Activated B cell treated with CpG ODN at 0.5 μM for 24 hours (primary cell): ENCODE measurements at regions of chr17 and their contacts with region 1.

Region 1: GRCh38 chr17:81833160-81833920 is at the start of gene MCRIP1:
- DNase-seq: peak; percentile 97
- ATAC-seq: peak; percentile 81
- H3K4me3 Mint-ChIP-seq: peak within 1 kb of the TSS; percentile 92
- H3K27ac Mint-ChIP-seq: peak within 1 kb of the TSS; percentile 91
- H3K4me1 Mint-ChIP-seq: peaks cover 22% of the 10 kb centered on the region
- H3K27me3 Mint-ChIP-seq: no peaks in the 10 kb centered on the region
- CTCF ChIP-seq: no peak
- total RNA-seq, gene MCRIP1: 75.0 and 90.4 TPM in 2 replicates

Region 2: GRCh38 chr17:81576621-81577277 is 256.6 kb before region 1 on chr17:
- CTCF ChIA-PET with region 1: no interaction called
- POLR2A ChIA-PET with region 1: no interaction called
- intact Hi-C with region 1: no loop called
- DNase-seq: no peak
- ATAC-seq: no peak
- H3K4me3 Mint-ChIP-seq: no peak overlapping the region
- H3K27ac Mint-ChIP-seq: no peak overlapping the region
- H3K4me1 Mint-ChIP-seq: peaks cover 8% of the 10 kb centered on the region
- H3K27me3 Mint-ChIP-seq: no peaks in the 10 kb centered on the region
- CTCF ChIP-seq: no peak

Region 3: DNA sequence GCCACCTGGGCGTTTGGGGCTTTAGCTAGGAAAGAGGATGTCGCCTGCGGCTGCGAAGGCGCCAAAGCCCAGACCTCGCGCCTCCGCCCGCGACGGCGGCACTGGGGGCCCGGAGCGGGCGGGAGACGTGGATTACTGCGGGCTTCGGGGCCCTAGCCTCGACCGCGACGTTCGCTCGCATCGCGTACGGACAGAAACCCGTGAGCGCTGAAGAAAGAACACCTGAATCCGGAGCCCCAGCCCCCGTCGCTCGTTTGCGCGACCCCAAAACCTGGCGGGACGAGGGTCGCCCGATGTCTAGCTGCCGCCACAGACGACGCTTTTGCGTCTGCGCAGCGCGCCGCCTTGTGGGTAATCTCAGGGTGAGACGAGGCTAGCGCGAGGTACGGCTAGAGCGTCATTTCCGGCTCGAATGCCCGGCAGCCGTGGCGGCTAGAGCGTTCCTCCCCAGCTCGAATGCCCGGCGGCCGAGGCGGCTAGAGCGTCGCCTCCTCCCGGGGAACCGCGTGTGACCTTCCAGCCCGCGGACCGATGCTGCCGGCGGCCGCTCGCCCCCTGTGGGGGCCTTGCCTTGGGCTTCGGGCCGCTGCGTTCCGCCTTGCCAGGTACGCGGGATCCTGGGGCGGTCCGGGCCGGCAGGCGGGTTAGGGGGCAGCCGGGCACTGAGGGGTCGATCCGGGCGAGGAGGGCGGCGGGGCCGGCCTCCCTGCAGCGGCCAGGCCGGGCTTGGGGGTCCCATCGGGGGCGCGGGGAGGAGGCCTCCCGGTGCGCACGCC is 130.2 kb before region 1 on chr17 and contains the start of gene MRPL12:
- CTCF ChIA-PET with region 1: no interaction called
- POLR2A ChIA-PET with region 1: interaction called, 7 read pairs
- intact Hi-C with region 1: loop called (anchors 1 kb)
- DNase-seq: peak; percentile 84
- ATAC-seq: peak; percentile 94
- H3K4me3 Mint-ChIP-seq: peak within 1 kb of the TSS; percentile 89
- H3K27ac Mint-ChIP-seq: peak within 1 kb of the TSS; percentile 86
- H3K4me1 Mint-ChIP-seq: peaks cover 38% of the 10 kb centered on the region
- H3K27me3 Mint-ChIP-seq: no peaks in the 10 kb centered on the region
- CTCF ChIP-seq: no peak
- total RNA-seq, gene MRPL12: 68.8 and 69.8 TPM in 2 replicates

Region 4: DNA sequence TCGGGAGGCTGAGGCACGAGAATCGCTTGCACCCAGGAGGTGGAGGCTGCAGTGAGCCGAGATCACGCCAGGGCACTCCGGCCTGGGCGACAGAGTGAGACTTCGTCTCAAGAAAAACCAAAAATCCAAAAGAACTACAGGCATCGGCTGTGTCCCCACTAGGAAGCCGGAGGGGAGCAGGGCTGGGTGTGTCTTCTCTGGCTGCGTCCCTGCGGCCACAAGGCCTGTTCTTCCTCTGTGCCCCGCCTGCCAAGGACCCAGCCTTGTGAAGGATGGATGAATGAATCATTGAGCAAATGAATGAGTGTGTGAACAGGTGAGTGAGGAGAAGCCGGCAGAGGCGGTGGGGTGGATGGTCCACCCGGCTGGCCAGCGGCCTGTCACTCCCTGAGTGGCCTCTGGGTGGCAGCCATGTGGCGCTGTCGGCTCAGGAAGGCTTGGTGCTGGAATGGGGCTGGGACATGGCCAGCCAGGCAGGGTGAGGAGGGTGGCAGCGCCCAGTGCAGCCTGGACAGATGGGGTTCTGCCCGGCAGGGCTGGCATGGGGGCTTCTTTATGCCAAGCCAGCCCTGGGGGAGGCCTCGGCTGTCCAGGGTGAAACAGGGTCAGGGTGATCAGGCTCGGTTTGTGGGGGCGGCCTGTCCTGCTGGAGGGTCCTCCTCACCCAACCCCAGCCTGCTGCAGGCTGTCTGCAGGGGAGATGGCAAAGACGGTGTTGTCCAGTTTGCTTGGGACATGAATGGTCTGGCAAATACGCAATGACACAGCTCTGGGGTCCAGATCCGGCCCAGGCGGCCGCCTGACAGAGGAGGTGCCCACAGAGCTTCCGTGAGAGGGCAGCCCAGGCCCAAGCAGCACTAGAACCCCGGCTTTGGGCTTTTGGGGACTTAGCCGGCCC is 99.6 kb before region 1 on chr17:
- CTCF ChIA-PET with region 1: no interaction called
- POLR2A ChIA-PET with region 1: interaction called, 9 read pairs
- intact Hi-C with region 1: loop called (anchors 1 kb)
- DNase-seq: peak; percentile 63
- ATAC-seq: peak; percentile 66
- H3K4me3 Mint-ChIP-seq: no peak overlapping the region
- H3K27ac Mint-ChIP-seq: no peak overlapping the region
- H3K4me1 Mint-ChIP-seq: peaks cover 24% of the 10 kb centered on the region
- H3K27me3 Mint-ChIP-seq: peaks cover 19% of the 10 kb centered on the region
- CTCF ChIP-seq: peak; percentile 35

Region 5: GRCh38 chr17:81844327-81844851 is 11.0 kb after region 1 on chr17:
- CTCF ChIA-PET with region 1: no interaction called
- POLR2A ChIA-PET with region 1: no interaction called
- intact Hi-C with region 1: no loop called
- DNase-seq: no peak
- ATAC-seq: no peak
- H3K4me3 Mint-ChIP-seq: no peak overlapping the region
- H3K27ac Mint-ChIP-seq: no peak overlapping the region
- H3K4me1 Mint-ChIP-seq: no peaks in the 10 kb centered on the region
- H3K27me3 Mint-ChIP-seq: no peaks in the 10 kb centered on the region
- CTCF ChIP-seq: no peak

Region 6: DNA sequence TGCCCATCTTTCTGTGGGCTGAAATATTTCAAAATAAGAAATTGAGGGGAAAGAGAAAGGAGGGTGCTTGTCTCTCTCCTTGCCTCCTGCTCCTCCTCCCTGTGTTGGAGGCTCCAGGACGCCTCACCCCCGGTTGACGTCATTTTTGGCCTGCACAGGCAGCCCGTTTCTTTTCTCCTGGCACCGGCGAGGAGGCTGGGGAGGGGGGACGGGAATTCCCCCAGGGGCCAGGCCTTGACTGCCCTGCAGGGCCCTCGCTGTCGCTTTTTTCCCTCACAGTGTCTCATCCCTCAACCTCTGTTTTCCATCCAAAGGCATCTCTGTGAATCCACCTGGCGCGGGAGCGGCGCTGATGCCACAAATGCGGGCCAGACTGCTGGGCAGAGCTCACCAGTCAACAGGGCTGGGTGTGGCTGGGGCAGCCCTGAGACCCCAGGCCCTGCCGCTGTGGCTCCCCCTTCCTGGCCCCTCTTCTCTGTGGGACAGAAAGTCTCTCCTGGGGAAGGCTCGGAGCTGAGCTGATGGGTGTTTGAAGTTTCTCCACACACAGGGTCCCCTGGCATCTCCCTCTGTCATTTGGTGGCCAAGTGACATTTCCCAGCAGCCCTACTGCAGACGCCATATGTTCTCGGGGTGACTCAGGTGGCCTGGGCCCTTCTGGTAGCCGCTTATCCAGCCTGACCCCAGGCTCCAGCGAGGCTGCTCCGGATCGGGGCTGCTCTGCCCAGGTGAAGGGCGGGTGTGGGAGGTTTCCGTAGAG is 173.3 kb after region 1 on chr17:
- CTCF ChIA-PET with region 1: no interaction called
- POLR2A ChIA-PET with region 1: no interaction called
- intact Hi-C with region 1: no loop called
- DNase-seq: no peak
- ATAC-seq: no peak
- H3K4me3 Mint-ChIP-seq: no peak overlapping the region
- H3K27ac Mint-ChIP-seq: no peak overlapping the region
- H3K4me1 Mint-ChIP-seq: no peaks in the 10 kb centered on the region
- H3K27me3 Mint-ChIP-seq: no peaks in the 10 kb centered on the region
- CTCF ChIP-seq: no peak